Cardiac septum (tissue), 1 donor: ENCODE measurements at regions of chr13 and their contacts with region 1.

Region 1: DNA sequence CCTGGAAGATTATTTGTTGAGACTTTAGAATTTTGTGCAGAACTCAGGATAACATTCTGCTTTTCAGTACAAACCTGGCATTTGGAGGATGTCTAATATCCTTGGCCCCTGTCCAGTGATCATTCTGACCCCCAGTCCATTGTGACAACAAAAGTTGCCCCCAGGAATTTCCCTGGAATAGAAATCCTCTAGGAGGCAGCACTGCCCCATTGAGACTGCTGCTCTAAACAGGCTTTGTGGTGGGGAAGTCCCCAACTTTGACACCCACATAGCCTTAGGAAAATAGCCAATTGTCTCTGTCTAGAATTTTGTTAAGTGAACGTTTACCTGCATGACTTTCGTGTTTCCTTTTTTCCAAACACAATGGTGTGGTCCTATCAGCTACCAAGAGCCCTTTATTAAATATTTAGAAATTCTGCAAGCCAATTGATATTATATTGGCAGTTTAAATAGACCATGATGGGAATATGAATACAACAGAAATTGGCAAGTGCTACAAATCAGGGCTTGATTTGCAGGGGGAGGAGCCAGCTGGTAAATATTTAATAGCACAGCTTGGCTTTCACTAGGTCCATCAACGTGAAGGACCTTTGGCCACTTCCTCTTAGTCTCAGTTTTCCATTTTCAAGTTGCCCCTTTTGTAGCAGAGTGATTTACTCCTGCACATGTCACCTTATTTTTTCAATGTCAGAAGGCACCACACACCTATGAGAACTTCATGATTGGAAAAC is 451.7 kb downstream of the EFNB2 start:
- DNase-seq: no peak

Region 2: GRCh38 chr13:106176117-106176516 is 92.3 kb after region 1 on chr13:
- intact Hi-C with region 1: no loop called
- DNase-seq: no peak

Region 3: DNA sequence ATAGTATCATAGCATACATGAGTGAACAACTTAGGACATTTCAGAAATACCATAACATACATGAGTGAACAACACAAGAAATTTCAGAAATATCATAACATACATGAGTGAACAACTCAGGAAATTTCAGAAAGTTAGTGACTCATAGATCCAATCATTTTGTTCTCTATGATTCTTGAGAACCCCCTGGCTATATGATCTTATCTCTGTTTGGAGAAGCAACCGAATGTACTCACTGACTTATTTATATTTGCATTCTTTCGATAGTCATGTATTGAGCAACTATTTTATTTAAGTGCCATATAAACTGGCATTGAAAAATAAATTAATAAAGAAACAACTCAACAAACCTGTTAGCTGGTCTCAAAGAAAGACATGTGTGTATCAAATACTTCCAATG is 200.6 kb after region 1 on chr13:
- intact Hi-C with region 1: no loop called
- DNase-seq: no peak

Region 4: DNA sequence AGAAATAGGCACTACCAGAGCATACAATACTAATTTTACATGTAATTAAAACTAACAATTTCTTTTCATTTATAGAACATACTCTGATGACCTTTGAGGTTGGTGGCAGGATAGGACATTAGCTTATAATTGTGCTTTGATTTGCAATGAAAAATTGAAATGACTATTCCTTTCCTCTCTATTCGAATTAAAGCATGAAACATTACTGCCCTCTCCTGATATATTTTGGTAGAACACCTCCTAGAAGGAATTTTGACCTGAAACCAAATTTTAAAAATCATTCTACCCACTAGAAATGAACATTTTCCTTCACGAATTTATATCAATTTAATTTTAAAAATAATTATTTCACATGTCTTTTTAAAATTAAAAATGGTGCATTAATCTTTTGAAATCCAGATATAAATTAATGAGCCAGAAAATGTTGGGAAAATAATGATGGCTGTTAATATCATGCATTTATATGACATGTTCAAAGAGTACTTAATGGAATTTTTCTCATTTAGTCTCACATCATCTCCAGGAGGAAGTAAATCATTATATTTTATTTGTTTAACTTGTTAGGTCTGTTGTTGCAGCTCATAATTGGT is 1040.4 kb after region 1 on chr13:
- intact Hi-C with region 1: loop called (anchors 5 kb)
- DNase-seq: no peak